ENCODE measurements at regions of chr17 and their contacts with region 1.

Region 1: DNA sequence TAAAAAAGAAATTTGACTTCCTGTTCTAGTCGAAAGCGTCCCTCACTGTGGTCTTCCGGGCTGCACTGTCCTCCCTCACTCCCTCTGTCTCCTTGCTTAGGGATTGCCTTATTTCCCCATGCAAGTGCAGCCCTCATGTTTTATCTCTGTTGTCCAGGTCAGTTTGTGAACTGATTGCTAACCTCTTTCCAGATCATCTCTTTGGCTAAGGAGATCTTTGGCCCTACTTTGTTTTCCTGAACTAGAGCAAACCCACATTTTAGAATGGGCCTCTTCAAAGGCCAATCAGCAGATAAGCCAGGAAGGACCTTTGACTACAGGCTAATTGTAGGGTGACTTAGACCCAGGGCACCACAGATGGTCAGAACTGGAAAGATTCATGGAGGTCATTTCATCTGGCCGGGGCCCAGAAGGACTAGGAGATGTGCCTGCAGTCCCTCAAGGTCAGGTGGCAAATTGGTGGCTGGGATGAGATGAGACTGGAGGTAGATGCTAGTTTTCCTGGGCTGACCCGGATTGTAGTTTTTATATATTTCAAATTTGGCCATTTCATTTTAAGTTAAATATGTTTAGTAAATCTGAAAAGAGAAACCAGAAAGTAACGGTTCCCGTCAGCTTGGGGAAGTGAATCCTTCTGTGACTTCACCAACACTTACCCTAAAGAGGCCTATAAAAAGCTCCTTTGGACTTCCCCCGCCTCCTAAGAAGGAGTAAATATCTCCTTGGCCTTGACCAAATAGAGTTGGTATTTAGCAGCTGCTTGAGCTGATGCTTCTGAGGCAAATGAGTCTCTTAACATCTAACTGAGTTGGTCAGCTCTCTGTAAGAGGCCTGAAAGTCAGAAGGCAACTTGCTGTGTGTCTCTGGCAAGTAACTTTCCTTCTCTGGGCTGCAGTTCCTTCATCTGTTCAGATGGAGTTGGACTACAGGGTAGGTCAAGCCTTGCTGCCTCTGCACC is 6.2 kb upstream of the SLC25A19 start:
- DNase-seq: peak; percentile 92
- ATAC-seq: peak; percentile 70
- H3K4me3 ChIP-seq: peak overlapping the region in 4 of 5 experiments; percentile 12 to 59 (median 28)
- H3K4me3 Mint-ChIP-seq: peak overlapping the region; percentile 62
- H3K27ac ChIP-seq: peak overlapping the region; percentile 98
- H3K27ac Mint-ChIP-seq: peak overlapping the region; percentile 95
- H3K4me1 ChIP-seq: peaks cover 52 to 69% of the 10 kb centered on the region in 2 donors
- H3K4me1 Mint-ChIP-seq: peaks cover 43% of the 10 kb centered on the region
- H3K27me3 ChIP-seq: no peaks in the 10 kb centered on the region
- H3K27me3 Mint-ChIP-seq: no peaks in the 10 kb centered on the region
- CTCF ChIP-seq: no peak

Region 2: DNA sequence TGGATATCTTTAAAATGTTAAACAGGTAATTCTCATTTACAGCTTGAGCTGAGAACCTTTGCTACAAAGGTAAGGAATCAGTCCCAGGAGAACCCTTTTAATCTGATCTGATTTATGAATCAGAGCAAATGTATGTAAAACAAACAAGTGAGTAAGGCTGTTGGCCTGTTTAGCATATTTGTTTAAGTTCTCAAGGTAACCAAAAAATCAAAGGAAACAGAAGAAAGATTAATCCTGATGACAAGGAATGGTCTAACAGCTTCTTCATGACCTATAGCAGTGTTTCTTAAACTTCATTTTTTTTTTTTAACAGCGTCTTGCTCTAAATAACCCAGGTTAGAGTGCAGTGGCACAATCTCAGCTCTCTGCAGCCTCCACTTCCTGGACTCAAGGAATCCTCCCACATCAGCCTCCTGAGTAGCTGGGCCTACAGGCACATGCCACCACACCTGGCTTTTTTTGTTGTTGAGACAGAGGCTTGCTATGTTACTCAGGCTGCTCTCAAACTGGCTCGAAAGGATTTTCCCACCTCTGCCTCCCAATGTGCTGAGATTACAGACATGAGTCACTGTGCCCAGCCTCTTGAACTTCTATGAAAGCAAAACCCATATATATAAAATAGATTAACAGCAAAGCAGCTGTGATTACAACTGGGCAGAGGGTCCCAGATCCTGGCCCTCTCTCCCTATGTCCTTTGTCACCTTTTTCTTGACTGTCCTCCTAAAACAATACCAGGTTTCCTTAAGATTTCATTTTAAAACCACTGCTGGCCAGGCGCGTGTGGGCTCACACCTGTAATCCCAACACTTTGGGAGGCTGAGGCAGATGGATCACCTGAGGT is 136.1 kb before region 1 on chr17:
- CTCF ChIA-PET with region 1: no interaction called
- POLR2A ChIA-PET with region 1: no interaction called
- intact Hi-C with region 1: no loop called
- DNase-seq: no peak
- ATAC-seq: no peak
- H3K4me3 ChIP-seq: no peak overlapping the region
- H3K4me3 Mint-ChIP-seq: no peak overlapping the region
- H3K27ac ChIP-seq: no peak overlapping the region
- H3K27ac Mint-ChIP-seq: no peak overlapping the region
- H3K4me1 ChIP-seq: peaks cover 6 to 14% of the 10 kb centered on the region in 2 donors
- H3K4me1 Mint-ChIP-seq: peaks cover 8% of the 10 kb centered on the region
- H3K27me3 ChIP-seq: no peaks in the 10 kb centered on the region
- H3K27me3 Mint-ChIP-seq: no peaks in the 10 kb centered on the region
- CTCF ChIP-seq: no peak

Region 3: GRCh38 chr17:75191584-75191983 is 103.9 kb before region 1 on chr17:
- CTCF ChIA-PET with region 1: no interaction called
- POLR2A ChIA-PET with region 1: no interaction called
- intact Hi-C with region 1: no loop called
- DNase-seq: no peak
- ATAC-seq: no peak
- H3K4me3 ChIP-seq: no peak overlapping the region
- H3K4me3 Mint-ChIP-seq: no peak overlapping the region
- H3K27ac ChIP-seq: no peak overlapping the region
- H3K27ac Mint-ChIP-seq: no peak overlapping the region
- H3K4me1 ChIP-seq: no peaks in the 10 kb centered on the region
- H3K4me1 Mint-ChIP-seq: no peaks in the 10 kb centered on the region
- H3K27me3 ChIP-seq: no peaks in the 10 kb centered on the region
- H3K27me3 Mint-ChIP-seq: no peaks in the 10 kb centered on the region
- CTCF ChIP-seq: no peak

Region 4: GRCh38 chr17:75313941-75314551 is 18.6 kb after region 1 on chr17:
- CTCF ChIA-PET with region 1: interaction called, 84 read pairs
- POLR2A ChIA-PET with region 1: interaction called, 103 read pairs
- intact Hi-C with region 1: loop called (anchors 1 kb)
- DNase-seq: no peak
- ATAC-seq: no peak
- H3K4me3 ChIP-seq: no peak overlapping the region
- H3K4me3 Mint-ChIP-seq: peak overlapping the region; percentile 27
- H3K27ac ChIP-seq: peak overlapping the region; percentile 18 to 60
- H3K27ac Mint-ChIP-seq: peak overlapping the region; percentile 91
- H3K4me1 ChIP-seq: peaks cover 26 to 68% of the 10 kb centered on the region in 2 donors
- H3K4me1 Mint-ChIP-seq: peaks cover 52% of the 10 kb centered on the region
- H3K27me3 ChIP-seq: no peaks in the 10 kb centered on the region
- H3K27me3 Mint-ChIP-seq: no peaks in the 10 kb centered on the region
- CTCF ChIP-seq: no peak

Region 5: GRCh38 chr17:75400326-75400939 is 105.0 kb after region 1 on chr17:
- CTCF ChIA-PET with region 1: interaction called, 20 read pairs
- POLR2A ChIA-PET with region 1: interaction called, 25 read pairs
- intact Hi-C with region 1: loop called (anchors 2 kb)
- DNase-seq: no peak
- ATAC-seq: no peak
- H3K4me3 ChIP-seq: peak overlapping the region in 1 of 5 experiments; percentile 29
- H3K4me3 Mint-ChIP-seq: peak overlapping the region; percentile 67
- H3K27ac ChIP-seq: peak overlapping the region in 1 of 2 donors; percentile 28
- H3K27ac Mint-ChIP-seq: peak overlapping the region; percentile 37
- H3K4me1 ChIP-seq: peaks cover 53 to 82% of the 10 kb centered on the region in 2 donors
- H3K4me1 Mint-ChIP-seq: peaks cover 63% of the 10 kb centered on the region
- H3K27me3 ChIP-seq: no peaks in the 10 kb centered on the region
- H3K27me3 Mint-ChIP-seq: no peaks in the 10 kb centered on the region
- CTCF ChIP-seq: no peak

Region 6: GRCh38 chr17:75412455-75413317 is 117.2 kb after region 1 on chr17:
- CTCF ChIA-PET with region 1: interaction called, 76 read pairs
- POLR2A ChIA-PET with region 1: interaction called, 6 read pairs
- intact Hi-C with region 1: loop called (anchors 1 kb)
- DNase-seq: peak; percentile 90
- ATAC-seq: peak; percentile 94
- H3K4me3 ChIP-seq: peak overlapping the region in 4 of 5 experiments; percentile 9 to 30 (median 23)
- H3K4me3 Mint-ChIP-seq: peak overlapping the region; percentile 68
- H3K27ac ChIP-seq: no peak overlapping the region
- H3K27ac Mint-ChIP-seq: peak overlapping the region; percentile 62
- H3K4me1 ChIP-seq: peaks cover 7 to 14% of the 10 kb centered on the region in 2 donors
- H3K4me1 Mint-ChIP-seq: peaks cover 13% of the 10 kb centered on the region
- H3K27me3 ChIP-seq: no peaks in the 10 kb centered on the region
- H3K27me3 Mint-ChIP-seq: no peaks in the 10 kb centered on the region
- CTCF ChIP-seq: peak; percentile 79

Measured in B cell (primary cell).